OCI-LY7 (cell line): ENCODE measurements at regions of chr13 and their contacts with region 1.

Region 1: DNA sequence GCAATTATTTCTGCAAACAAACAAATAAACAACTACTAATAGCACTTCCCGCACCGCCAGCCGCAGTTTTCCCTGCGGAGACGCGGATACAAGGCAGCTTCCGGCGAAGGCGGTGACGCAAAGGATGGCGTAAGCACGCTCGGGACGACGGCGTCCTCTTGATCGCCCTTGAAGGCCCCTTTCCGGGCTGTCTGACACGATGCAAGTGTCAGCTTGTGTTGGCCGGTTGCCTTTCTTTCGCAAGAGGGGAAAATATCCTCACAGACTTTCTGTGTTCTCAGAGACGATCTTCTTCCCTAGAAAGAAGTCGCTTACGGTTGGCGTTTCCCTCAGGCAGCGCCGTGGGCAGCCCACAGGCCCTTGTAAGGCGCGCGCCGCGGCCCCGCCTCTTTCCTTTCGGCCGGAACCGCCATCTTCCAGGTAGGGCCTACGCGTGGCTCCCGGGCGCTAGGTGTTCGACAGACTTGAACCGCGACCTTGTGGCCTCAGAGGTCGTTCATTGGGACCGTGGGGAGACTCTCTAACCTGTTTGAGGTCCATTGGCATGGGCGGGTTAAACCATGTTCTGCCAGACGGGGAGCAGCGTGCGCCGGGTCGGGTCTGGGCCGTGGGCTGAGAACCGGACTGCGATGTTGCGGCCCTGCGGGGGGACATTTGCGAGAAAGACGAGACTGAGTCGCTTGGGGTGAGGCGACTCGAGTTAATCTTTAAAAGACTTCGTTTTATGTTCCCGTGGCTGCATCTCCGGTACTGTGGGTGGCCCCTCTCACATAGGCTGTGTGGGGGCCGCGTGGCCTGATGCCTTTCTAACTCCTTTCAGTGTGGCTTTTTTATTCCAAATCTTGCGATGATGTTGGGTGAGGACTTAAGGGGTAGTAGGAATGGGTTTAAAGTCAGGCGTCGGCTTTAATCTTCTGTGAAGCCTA is at the start of gene RPL21:
- DNase-seq: peak; percentile 97
- H3K4me3 ChIP-seq: peak within 1 kb of the TSS; percentile 99
- H3K27ac ChIP-seq: peak within 1 kb of the TSS; percentile 84
- H3K4me1 ChIP-seq: peaks cover 42% of the 10 kb centered on the region
- CTCF ChIP-seq: no peak
- total RNA-seq, gene RPL21: 1,266 and 1,706 TPM in 2 replicates

Region 2: GRCh38 chr13:26813321-26813979 is 438.0 kb before region 1 on chr13:
- CTCF ChIA-PET with region 1: no interaction called
- POLR2A ChIA-PET with region 1: no interaction called
- intact Hi-C with region 1: no loop called
- DNase-seq: no peak
- H3K4me3 ChIP-seq: no peak overlapping the region
- H3K27ac ChIP-seq: no peak overlapping the region
- H3K4me1 ChIP-seq: no peaks in the 10 kb centered on the region
- CTCF ChIP-seq: no peak

Region 3: DNA sequence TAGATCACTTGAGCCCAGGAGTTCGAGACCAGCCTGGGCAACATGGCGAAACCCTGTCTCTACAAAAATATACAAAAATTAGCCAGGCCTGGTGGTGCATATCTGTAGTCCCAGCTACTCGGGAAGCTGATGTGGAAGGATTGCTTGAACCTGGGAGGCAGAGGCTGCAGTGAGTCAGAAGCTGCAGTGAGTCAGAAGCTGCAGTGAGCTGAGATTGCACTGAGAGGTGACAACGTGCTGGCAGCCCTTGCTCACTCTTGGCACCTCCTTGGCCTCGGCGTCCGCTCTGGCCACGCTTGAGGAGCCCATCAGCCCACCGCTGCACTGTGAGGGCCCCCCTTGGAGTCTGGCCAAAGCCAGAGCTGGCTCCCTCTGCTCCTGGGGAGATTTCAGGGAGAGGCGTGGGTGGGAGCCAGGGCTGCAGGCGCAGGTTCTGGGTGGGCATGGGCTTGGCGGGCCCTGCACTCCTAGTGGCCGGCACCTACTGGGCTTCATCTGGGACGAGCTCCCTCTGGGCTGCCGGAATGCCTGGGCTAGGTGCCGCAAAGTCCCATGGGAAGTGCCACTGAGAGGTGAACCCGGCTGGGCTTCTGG is 39.6 kb before region 1 on chr13:
- CTCF ChIA-PET with region 1: no interaction called
- POLR2A ChIA-PET with region 1: no interaction called
- intact Hi-C with region 1: no loop called
- DNase-seq: no peak
- H3K4me3 ChIP-seq: no peak overlapping the region
- H3K27ac ChIP-seq: no peak overlapping the region
- H3K4me1 ChIP-seq: no peaks in the 10 kb centered on the region
- CTCF ChIP-seq: no peak

Region 4: DNA sequence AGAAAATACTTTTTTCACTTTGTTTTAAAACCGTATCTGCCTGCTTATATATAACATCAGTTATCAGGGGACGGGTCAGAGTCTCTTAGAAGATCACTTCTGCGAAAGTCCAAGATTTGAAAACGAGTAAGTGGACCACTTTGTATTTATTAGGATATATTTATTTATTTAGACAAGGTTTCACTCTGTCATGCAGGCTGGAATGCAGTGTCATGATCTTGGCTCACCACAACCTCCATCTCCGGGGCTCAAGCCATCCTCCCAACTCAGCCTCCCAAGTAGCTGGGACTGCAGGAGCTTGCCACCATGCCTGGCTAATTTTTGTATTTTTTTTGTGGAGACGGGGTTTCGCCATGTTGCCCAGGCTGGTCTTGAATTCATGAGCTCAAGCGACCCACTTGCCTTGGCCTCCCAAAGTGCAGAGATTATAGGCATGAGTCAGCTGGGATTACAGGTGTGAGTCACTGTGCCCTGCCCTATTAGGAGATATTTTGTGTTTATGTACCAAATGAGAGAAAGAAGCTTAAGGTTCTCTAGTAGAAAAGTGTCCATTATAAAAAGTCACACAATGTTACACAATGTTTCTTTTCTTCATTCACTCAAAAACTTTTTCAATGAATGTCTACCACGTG is 58.7 kb after region 1 on chr13:
- CTCF ChIA-PET with region 1: no interaction called
- POLR2A ChIA-PET with region 1: interaction called, 4 read pairs
- intact Hi-C with region 1: loop called (anchors 5 kb)
- DNase-seq: no peak
- H3K4me3 ChIP-seq: no peak overlapping the region
- H3K27ac ChIP-seq: no peak overlapping the region
- H3K4me1 ChIP-seq: peaks cover 67% of the 10 kb centered on the region
- CTCF ChIP-seq: no peak

Region 5: GRCh38 chr13:27808851-27809550 is 557.6 kb after region 1 on chr13:
- CTCF ChIA-PET with region 1: no interaction called
- POLR2A ChIA-PET with region 1: no interaction called
- intact Hi-C with region 1: no loop called
- DNase-seq: no peak
- H3K4me3 ChIP-seq: no peak overlapping the region
- H3K27ac ChIP-seq: no peak overlapping the region
- H3K4me1 ChIP-seq: no peaks in the 10 kb centered on the region
- CTCF ChIP-seq: no peak